Transverse colon (tissue), 4 donors: ENCODE measurements at regions of chr1 and their contacts with region 1.

Region 1: GRCh38 chr1:237041795-237042525 is at the start of gene RYR2:
- DNase-seq: no peak
- H3K4me3 ChIP-seq: peak within 1 kb of the TSS; percentile 17 to 50 (median 40)
- H3K27ac ChIP-seq: peak within 1 kb of the TSS; percentile 50 to 78 (median 69)
- H3K4me1 ChIP-seq: peaks cover 0 to 17% (median 5%) of the 10 kb centered on the region in 4 donors
- H3K27me3 ChIP-seq: peaks cover 72% of the 10 kb centered on the region
- CTCF ChIP-seq: peak in 4 of 5 experiments; percentile 18 to 48 (median 45)
- EP300 ChIP-seq: no peak
- POLR2A ChIP-seq: no peak
- total RNA-seq, gene RYR2: 1.2 to 7.0 (median 2.5) TPM

Region 2: DNA sequence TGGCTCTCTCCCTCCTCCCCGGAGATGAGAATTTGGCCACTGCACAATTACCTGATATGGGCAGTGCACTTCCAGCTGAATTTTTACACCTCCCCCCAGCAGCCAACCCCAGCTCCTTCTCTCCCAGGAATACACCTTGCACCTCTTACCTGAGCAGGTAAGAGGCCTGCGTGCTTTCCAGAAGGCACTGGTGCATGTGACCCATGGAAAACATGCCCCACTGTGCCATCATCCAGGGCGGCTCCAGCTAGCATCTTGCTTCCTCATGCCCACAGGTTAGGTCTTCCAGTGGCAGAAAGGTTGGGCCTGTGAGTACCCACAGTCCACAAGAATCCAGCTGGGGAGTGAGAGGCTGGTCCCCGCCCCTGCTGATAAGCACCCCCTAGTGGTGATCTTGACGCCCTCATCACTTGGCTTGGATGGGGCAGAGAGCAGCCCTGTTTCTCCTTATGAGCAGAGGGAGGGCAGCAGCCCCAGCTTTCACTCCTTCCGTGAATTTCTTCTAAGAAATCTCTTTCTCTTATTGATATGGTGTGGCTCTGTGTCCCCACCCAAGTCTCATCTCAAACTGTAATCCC is 590.1 kb before region 1 on chr1:
- in situ Hi-C with region 1: no loop called
- intact Hi-C with region 1: no loop called
- DNase-seq: peak; percentile 16
- H3K4me3 ChIP-seq: no peak overlapping the region
- H3K27ac ChIP-seq: no peak overlapping the region
- H3K4me1 ChIP-seq: no peaks in the 10 kb centered on the region
- H3K27me3 ChIP-seq: no peaks in the 10 kb centered on the region
- CTCF ChIP-seq: peak in 4 of 5 experiments; percentile 20 to 39 (median 21)
- EP300 ChIP-seq: no peak
- POLR2A ChIP-seq: no peak

Region 3: GRCh38 chr1:236523701-236524141 is 518.2 kb before region 1 on chr1 and contains the start of gene LGALS8:
- in situ Hi-C with region 1: no loop called
- intact Hi-C with region 1: no loop called
- DNase-seq: peak; percentile 88
- H3K4me3 ChIP-seq: peak within 1 kb of the TSS; percentile 38 to 91 (median 76)
- H3K27ac ChIP-seq: peak within 1 kb of the TSS; percentile 90 to 95 (median 94)
- H3K4me1 ChIP-seq: peaks cover 0 to 15% (median 6%) of the 10 kb centered on the region in 4 donors
- H3K27me3 ChIP-seq: no peaks in the 10 kb centered on the region
- CTCF ChIP-seq: no peak
- EP300 ChIP-seq: no peak
- POLR2A ChIP-seq: peak; percentile 46
- total RNA-seq, gene LGALS8: 38.2 to 88.1 (median 59.3) TPM

Region 4: GRCh38 chr1:237386362-237387143 is 344.6 kb after region 1 on chr1:
- in situ Hi-C with region 1: no loop called
- intact Hi-C with region 1: loop called (anchors 10 kb)
- DNase-seq: no peak
- H3K4me3 ChIP-seq: no peak overlapping the region
- H3K27ac ChIP-seq: no peak overlapping the region
- H3K4me1 ChIP-seq: peaks cover 0 to 12% (median 0%) of the 10 kb centered on the region in 4 donors
- H3K27me3 ChIP-seq: no peaks in the 10 kb centered on the region
- CTCF ChIP-seq: peak; percentile 38 to 65 (median 54)
- EP300 ChIP-seq: no peak
- POLR2A ChIP-seq: no peak